ENCODE measurements at regions of chr16 and their contacts with region 1.

Region 1: DNA sequence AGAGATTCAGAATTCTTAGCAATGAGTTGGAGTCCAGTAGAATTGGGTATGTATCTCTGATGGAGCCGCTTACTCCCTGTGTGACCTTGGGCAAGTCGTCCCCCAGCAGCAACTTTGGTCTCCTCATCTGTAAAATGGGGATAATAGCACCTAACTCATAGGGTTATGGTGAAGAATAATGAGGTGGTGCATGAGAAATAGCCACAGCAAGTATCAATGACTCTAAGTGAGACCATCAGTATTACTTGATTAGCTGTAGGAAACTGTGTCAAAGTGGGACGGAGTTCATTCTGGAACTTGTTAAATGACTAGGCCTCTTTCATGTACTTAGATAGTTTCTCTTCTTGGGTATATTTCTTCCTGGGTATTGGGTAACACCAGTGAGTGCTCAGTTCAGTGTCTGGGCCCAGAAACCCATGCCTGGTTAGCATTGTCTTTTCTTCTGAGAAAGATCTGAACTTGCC is 6.4 kb downstream of the PRKCB start:
- DNase-seq: peak; percentile 96
- ATAC-seq: peak; percentile 76
- H3K4me3 ChIP-seq: peak overlapping the region; percentile 58; the same call in 1 of the 2 replicates
- H3K27ac ChIP-seq: peak overlapping the region; percentile 80
- H3K4me1 ChIP-seq: peaks cover 40% of the 10 kb centered on the region
- H3K27me3 ChIP-seq: no peaks in the 10 kb centered on the region
- CTCF ChIP-seq: no peak
- EP300 ChIP-seq: peak; percentile 82 to 95
- POLR2A ChIP-seq: no peak
- RAD21 ChIP-seq: 0 out of 2 replicates have a peak, but pooled peaks have one; percentile 21

Region 2: DNA sequence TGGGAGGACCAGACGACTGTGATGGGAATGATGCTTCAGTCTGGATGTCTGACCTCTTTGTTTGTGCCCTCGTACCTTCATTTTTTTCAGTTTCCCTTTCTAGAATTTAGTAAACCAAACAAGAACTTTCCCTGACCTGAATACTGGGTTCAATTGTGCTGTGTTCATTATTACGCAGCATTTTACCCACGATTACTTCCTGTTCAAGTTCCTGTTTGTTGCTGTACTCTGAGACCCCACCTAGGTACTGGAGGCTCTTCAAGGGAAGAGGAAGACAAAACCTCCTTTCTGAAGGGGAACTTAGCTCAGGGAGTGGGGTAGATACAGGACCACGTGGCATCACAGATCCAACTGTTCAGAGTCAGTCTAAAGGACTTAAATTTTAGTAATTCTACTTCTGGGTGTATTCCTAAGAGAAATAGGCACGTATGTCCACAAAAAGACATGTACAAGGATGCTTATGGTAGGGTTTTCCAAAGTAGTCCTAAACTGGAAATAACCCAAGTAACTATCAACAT is 15.6 kb before region 1 on chr16:
- CTCF ChIA-PET with region 1: interaction called, 9 read pairs
- POLR2A ChIA-PET with region 1: interaction called, 3 read pairs
- RAD21 ChIA-PET with region 1: interaction called, 3 read pairs
- SMC1A ChIA-PET with region 1: interaction called, 10 read pairs
- in situ Hi-C with region 1: no loop called
- intact Hi-C with region 1: no loop called
- DNase-seq: peak; percentile 79
- ATAC-seq: peak; percentile 91
- H3K4me3 ChIP-seq: 0 out of 2 replicates have a peak overlapping the region, but pooled peaks have one; percentile 1
- H3K27ac ChIP-seq: peak overlapping the region; percentile 63
- H3K4me1 ChIP-seq: peaks cover 21% of the 10 kb centered on the region
- H3K27me3 ChIP-seq: no peaks in the 10 kb centered on the region
- CTCF ChIP-seq: no peak
- EP300 ChIP-seq: peak in 1 of 2 experiments; percentile 13; a peak in 1 of 4 replicates
- POLR2A ChIP-seq: no peak
- RAD21 ChIP-seq: no peak

Region 3: GRCh38 chr16:23858542-23858941 is 16.4 kb after region 1 on chr16:
- CTCF ChIA-PET with region 1: interaction called, 134 read pairs
- POLR2A ChIA-PET with region 1: interaction called, 79 read pairs
- RAD21 ChIA-PET with region 1: interaction called, 177 read pairs
- SMC1A ChIA-PET with region 1: interaction called, 466 read pairs
- in situ Hi-C with region 1: no loop called
- intact Hi-C with region 1: loop called (anchors 1 kb)
- DNase-seq: no peak
- ATAC-seq: no peak
- H3K4me3 ChIP-seq: no peak overlapping the region
- H3K27ac ChIP-seq: peak overlapping the region; percentile 83
- H3K4me1 ChIP-seq: peaks cover 89% of the 10 kb centered on the region
- H3K27me3 ChIP-seq: no peaks in the 10 kb centered on the region
- CTCF ChIP-seq: no peak
- EP300 ChIP-seq: no peak
- POLR2A ChIP-seq: no peak
- RAD21 ChIP-seq: no peak

Region 4: DNA sequence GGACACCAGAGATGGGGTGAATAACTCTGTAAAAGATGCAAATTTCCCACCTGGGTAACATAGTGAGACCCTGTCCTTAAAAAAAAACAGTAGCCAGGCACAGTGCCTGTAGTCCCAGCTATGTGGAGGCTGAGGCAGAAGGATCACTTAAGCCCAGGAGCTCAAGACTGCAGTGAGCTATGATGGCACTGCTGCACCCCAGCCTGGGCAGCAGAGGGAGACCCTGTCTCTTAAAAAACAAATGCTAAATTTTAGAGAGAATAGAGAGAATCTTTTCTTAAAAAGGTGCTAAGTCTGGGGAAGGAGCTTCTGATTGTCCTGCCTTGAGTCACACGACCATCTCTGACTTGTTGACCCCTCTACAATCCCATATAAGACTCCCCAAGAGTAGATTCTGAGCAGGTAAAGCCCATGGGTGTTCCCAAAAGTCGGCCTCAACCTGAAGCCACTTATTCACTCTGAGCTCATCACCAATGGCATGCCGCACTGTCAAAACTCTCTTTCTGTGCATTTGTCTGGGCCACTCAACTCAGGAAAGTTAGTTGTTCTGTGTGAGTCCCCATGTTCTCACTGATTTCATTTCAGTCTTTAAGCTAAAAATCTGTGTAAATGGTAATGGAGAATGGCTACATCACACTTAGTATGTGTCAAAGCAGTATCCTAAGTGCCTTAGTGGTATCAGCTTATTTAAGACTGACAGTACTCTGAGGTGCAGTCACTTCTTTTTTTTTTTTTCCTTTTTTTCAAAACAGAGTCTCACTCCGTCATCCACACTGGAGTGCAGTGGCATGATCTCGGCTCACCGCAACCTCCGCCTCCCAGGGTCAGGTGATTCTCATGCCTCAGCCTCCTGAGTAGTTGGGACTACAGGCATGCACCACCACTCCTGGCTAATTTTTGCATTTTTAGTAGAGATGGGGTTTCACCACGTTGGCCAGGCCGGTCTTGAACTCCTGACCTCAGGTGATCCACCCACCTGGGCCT is 35.2 kb after region 1 on chr16:
- CTCF ChIA-PET with region 1: interaction called, 18 read pairs
- POLR2A ChIA-PET with region 1: interaction called, 16 read pairs
- RAD21 ChIA-PET with region 1: interaction called, 54 read pairs
- SMC1A ChIA-PET with region 1: interaction called, 48 read pairs
- in situ Hi-C with region 1: no loop called
- intact Hi-C with region 1: loop called (anchors 2 kb)
- DNase-seq: no peak
- ATAC-seq: no peak; the same call in 2 of the 3 replicates
- H3K4me3 ChIP-seq: no peak overlapping the region
- H3K27ac ChIP-seq: peak overlapping the region; percentile 69
- H3K4me1 ChIP-seq: peaks cover 63% of the 10 kb centered on the region
- H3K27me3 ChIP-seq: no peaks in the 10 kb centered on the region
- CTCF ChIP-seq: peak; percentile 23 to 28 (median 27); a peak in 2 of 6 replicates
- EP300 ChIP-seq: no peak
- POLR2A ChIP-seq: no peak
- RAD21 ChIP-seq: peak; percentile 53

Region 5: DNA sequence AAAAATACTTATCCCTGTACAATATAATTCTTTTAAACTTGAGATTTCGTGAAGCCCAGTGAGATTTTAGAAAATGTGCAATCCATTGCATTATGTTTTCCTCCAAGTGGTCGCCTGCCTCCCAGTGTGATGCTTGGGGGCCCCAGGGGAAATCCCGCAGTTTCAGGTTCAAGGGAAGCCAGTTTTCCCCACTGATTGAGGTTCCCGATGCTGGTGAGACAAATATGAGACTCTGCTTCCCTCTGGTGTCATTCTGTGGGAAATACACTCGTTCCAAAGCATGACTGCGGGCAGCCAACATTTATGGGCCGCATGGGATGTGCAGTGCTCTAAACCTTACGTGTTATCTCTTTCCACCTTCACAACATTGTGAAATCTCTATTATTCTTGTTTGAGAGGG is 194.4 kb after region 1 on chr16:
- CTCF ChIA-PET with region 1: interaction called, 3 read pairs
- POLR2A ChIA-PET with region 1: interaction called, 4 read pairs
- RAD21 ChIA-PET with region 1: no interaction called
- SMC1A ChIA-PET with region 1: interaction called, 5 read pairs
- in situ Hi-C with region 1: no loop called
- intact Hi-C with region 1: loop called (anchors 1 kb)
- DNase-seq: no peak
- ATAC-seq: peak; percentile 69
- H3K4me3 ChIP-seq: no peak overlapping the region
- H3K27ac ChIP-seq: no peak overlapping the region
- H3K4me1 ChIP-seq: peaks cover 8% of the 10 kb centered on the region
- H3K27me3 ChIP-seq: no peaks in the 10 kb centered on the region
- CTCF ChIP-seq: peak; percentile 68 to 81 (median 72); a peak in 5 of 6 replicates
- EP300 ChIP-seq: no peak
- POLR2A ChIP-seq: no peak
- RAD21 ChIP-seq: peak; percentile 88

Measured in GM12878 (cell line).